ENCODE measurements at regions of chr3 and their contacts with region 1.

Region 1: DNA sequence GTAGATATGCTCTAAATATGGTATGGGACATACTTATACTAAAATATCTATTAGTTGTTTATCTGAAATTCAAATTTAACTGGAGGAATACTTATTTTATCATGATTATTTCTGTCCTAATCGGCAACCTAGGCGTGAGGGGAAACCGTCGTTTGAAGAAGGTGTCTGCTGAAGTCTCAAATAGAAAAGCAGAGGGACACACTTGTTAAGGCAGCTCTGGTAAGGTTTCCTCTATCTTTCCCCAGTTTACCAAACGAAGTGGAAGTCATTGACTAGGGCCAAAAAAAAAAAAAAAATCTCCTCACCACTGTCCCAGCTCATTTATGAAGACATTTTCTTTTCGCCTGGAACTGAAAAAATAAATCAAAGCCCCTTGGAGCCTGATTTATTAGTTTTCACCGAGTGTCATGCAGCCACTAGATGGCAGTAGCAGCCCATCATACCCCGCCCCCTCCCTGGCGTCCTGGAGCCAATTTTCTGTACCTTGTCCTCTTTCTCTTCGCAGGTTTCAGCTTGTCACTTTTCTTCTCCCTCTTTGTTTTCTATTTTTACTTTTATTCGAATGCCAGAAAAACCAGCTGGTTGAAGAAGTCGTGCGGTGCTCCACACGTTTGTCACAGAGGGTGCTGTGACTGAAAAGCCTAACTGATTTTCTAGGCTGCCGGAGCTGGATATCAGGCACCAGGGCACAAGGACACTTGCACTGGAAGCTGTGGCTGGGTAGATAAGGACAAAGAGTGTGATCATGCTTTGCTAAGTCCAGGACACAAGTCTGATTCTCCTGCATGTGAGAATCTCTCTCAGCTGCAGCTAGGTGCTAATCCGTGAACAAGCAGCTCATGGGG is 238.7 kb downstream of the ZPLD1 start:
- DNase-seq: peak; percentile 84
- H3K27ac ChIP-seq: no peak overlapping the region
- CTCF ChIP-seq: peak; percentile 82

Region 2: GRCh38 chr3:102741108-102741507 is 67.6 kb after region 1 on chr3:
- CTCF ChIA-PET with region 1: interaction called, 24 read pairs
- POLR2A ChIA-PET with region 1: no interaction called
- DNase-seq: peak; percentile 8
- H3K27ac ChIP-seq: no peak overlapping the region
- CTCF ChIP-seq: no peak

Measured in RWPE1 (cell line).